ENCODE measurements at regions of chr6 and their contacts with region 1.

Region 1: GRCh38 chr6:291697-292505 is at the start of gene DUSP22:
- DNase-seq: peak; percentile 89 to 91
- ATAC-seq: peak; percentile 84 to 94 (median 88)
- H3K4me3 ChIP-seq: peak within 1 kb of the TSS; percentile 51 to 85 (median 71)
- H3K27ac ChIP-seq: peak within 1 kb of the TSS; percentile 91 to 99 (median 98)
- H3K4me1 ChIP-seq: peaks cover 0 to 75% (median 24%) of the 10 kb centered on the region in 9 donors
- H3K27me3 ChIP-seq: peaks cover 0 to 4% (median 0%) of the 10 kb centered on the region in 7 donors
- CTCF ChIP-seq: peak in 1 of 9 donors; percentile 16
- total RNA-seq, gene DUSP22: 43.4 to 70.4 (median 52.5) TPM

Region 2: DNA sequence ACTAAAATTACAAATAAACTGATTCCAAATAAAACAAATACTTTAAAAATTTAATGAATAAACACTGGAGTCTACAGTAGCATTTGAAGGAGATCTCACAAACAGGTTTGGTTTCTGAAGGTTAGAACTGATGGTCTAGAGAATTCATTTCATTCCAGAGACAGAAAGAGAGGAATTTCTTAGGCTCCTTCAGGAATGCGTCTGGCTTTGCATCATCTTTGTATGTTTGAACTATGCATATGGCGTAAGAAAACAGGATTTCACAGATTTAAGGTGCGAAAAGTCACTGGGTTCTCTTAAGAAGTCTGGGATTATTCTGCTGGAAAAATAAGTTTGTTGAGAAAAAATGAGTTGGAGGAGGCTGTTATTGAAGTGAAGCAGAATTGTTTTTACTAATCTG is 139.5 kb before region 1 on chr6:
- intact Hi-C with region 1: no loop called
- DNase-seq: no peak
- ATAC-seq: no peak
- H3K4me3 ChIP-seq: no peak overlapping the region
- H3K27ac ChIP-seq: no peak overlapping the region
- H3K4me1 ChIP-seq: no peaks in the 10 kb centered on the region
- H3K27me3 ChIP-seq: peaks cover 0 to 58% (median 43%) of the 10 kb centered on the region in 7 donors
- CTCF ChIP-seq: no peak

Region 3: GRCh38 chr6:195861-196360 is 96.0 kb before region 1 on chr6:
- intact Hi-C with region 1: loop called in 1 of 10 experiments (anchors 5 kb)
- DNase-seq: peak in 1 of 2 donors; percentile 57
- ATAC-seq: peak; percentile 94 to 99 (median 97)
- H3K4me3 ChIP-seq: no peak overlapping the region
- H3K27ac ChIP-seq: peak overlapping the region in 9 of 10 donors; percentile 8 to 71 (median 37)
- H3K4me1 ChIP-seq: peaks cover 5 to 23% (median 12%) of the 10 kb centered on the region in 9 donors
- H3K27me3 ChIP-seq: no peaks in the 10 kb centered on the region
- CTCF ChIP-seq: no peak

Region 4: GRCh38 chr6:313087-313486 is 21.2 kb after region 1 on chr6:
- intact Hi-C with region 1: loop called in 1 of 10 experiments (anchors 2 kb)
- DNase-seq: no peak
- ATAC-seq: peak in 6 of 8 donors; percentile 19 to 84 (median 38)
- H3K4me3 ChIP-seq: no peak overlapping the region
- H3K27ac ChIP-seq: peak overlapping the region in 8 of 10 donors; percentile 3 to 73 (median 38)
- H3K4me1 ChIP-seq: peaks cover 0 to 48% (median 29%) of the 10 kb centered on the region in 9 donors
- H3K27me3 ChIP-seq: no peaks in the 10 kb centered on the region
- CTCF ChIP-seq: no peak

Region 5: DNA sequence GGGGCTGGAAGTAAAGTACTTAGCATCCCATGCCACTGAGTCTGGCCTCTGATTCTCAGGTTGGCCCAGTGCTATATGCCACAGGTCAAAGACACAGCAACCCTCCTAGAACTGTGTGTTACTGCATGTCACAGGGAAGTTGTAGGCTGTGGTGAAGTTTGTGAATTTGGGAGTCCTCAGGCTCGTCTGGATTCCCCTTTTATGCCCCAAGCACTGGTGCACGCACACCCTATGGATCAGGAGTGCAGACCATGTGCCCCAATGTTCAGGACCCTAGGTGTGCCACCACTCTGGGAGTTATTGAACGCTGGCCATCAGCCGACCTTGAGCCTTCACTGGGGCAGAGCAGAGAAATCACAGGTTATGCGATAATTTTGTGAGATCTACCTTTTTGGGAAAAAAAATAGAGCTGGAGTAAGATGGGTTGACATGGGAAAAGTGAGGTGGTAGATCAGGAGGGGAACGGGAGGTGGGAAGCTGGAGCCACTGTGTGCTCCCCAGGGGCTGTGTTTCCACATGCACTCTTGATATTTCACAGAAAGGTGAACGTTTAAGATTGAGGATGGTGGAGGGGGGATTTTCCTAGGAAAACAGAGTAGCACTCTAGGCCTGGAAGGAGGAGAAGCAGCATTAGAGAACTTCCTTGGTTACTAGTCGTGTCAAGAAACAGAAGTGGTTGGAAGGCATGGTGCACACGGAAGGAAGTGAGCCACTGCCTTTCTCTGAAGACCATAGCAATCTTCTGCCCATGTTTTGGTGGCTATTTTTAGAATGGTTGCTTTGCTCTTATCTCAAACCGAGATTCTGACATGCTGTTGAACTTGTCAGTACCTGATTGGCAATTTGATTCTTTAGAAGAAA is 44.5 kb after region 1 on chr6:
- intact Hi-C with region 1: loop called in 2 of 10 experiments (anchors 5 kb)
- DNase-seq: no peak
- ATAC-seq: peak in 6 of 8 donors; percentile 32 to 55 (median 42)
- H3K4me3 ChIP-seq: no peak overlapping the region
- H3K27ac ChIP-seq: peak overlapping the region in 1 of 10 donors; percentile 55
- H3K4me1 ChIP-seq: peaks cover 7 to 94% (median 52%) of the 10 kb centered on the region in 9 donors
- H3K27me3 ChIP-seq: no peaks in the 10 kb centered on the region
- CTCF ChIP-seq: no peak

Measured in heart right ventricle (tissue), 16 donors.